Spleen (tissue), 13 donors: ENCODE measurements at regions of chr1 and their contacts with region 1.

Region 1: DNA sequence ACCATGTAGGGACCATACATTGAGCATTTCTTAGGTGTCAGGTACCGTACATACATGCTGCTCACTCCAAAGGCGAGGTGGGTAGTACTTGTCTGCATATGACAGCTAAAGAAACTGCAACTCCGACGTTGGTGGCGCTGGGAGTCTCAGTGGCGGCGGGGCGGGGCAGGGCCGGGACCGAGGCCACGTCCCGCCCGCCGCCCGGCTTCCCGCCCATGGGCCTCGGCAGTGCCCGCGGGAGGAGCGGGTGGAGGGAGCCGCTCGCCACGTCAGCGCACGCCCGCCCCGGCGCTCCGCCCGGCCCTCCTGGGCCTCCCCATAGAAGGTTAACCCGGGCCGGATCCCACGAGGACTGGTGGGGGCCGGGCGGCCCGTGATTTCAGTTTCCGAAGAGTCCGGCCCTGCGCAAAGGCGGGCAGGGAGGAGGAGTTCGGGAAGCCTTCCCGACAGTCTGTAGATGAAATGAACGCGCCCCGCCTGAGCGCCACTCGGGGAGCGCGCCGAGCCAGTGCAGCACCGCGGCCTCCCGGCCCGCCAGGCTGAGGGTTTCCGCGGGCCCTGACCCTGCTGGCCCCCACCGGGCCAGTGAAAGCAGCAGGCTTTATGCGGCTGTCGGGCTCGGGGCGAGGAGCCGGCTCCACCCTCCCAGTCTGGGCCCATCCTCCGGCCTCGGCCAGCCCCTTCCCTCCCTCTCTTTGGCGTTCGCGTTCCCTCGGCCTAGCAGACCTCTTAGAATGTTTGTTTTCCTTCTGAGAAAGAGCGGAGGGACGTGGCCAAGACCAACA is 119.9 kb upstream of the JUN start:
- DNase-seq: peak; percentile 96
- H3K4me3 ChIP-seq: peak overlapping the region; percentile 30 to 72 (median 44)
- H3K27ac ChIP-seq: peak overlapping the region; percentile 80 to 97 (median 93)
- H3K4me1 ChIP-seq: peaks cover 16 to 50% (median 29%) of the 10 kb centered on the region in 6 donors
- H3K27me3 ChIP-seq: no peaks in the 10 kb centered on the region
- CTCF ChIP-seq: peak in 2 of 11 experiments; percentile 7 to 11
- POLR2A ChIP-seq: peak in 1 of 3 donors; percentile 75

Region 2: GRCh38 chr1:58572690-58573089 is 331.0 kb before region 1 on chr1:
- intact Hi-C with region 1: no loop called
- DNase-seq: no peak
- H3K4me3 ChIP-seq: no peak overlapping the region
- H3K27ac ChIP-seq: no peak overlapping the region
- H3K4me1 ChIP-seq: peaks cover 5 to 38% (median 19%) of the 10 kb centered on the region in 6 donors
- H3K27me3 ChIP-seq: peaks cover 0 to 82% (median 41%) of the 10 kb centered on the region in 7 donors
- CTCF ChIP-seq: no peak
- POLR2A ChIP-seq: no peak

Region 3: DNA sequence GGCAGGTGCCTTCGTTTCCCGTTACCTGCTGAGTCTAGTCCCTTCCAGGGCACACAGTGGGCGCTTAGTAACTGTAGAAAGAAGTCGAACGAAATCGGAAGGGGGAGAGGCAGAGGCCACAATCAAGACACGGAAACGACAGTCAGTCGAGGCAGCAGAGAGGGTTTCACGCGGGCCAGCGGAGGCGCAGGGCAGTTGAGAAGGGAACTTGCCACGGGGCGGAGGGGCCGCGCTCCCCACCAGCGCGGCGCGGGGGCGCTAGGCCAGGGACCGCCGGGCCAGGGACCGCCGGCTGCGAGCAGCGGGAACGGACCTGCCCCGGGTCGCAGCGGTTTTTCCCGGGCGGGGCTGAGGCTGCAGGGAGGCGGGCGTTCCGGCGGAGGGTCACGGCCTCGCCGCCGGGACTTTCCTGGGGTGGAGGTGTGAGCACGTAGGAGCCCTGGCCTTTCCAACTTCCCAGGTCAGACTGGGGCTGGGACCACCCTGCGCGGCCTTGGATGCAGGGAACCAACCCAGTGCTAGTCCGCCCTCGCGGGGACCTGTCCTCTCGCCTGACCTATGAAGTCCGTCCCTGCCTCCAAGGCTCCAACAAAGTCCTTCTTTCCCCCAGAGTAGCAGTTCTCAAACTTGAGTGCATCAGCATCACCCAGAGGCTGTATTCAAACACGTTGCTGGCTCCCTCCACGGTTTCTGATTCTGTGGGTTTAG is 243.1 kb after region 1 on chr1:
- intact Hi-C with region 1: loop called (anchors 10 kb)
- DNase-seq: peak; percentile 90
- H3K4me3 ChIP-seq: peak overlapping the region; percentile 24 to 72 (median 38)
- H3K27ac ChIP-seq: peak overlapping the region; percentile 40 to 82 (median 68)
- H3K4me1 ChIP-seq: peaks cover 12 to 60% (median 39%) of the 10 kb centered on the region in 6 donors
- H3K27me3 ChIP-seq: peaks cover 0 to 7% (median 0%) of the 10 kb centered on the region in 7 donors
- CTCF ChIP-seq: peak in 6 of 11 experiments; percentile 15 to 43 (median 26)
- POLR2A ChIP-seq: peak in 1 of 3 donors; percentile 8